ENCODE measurements at regions of chr9 and their contacts with region 1.

Region 1: DNA sequence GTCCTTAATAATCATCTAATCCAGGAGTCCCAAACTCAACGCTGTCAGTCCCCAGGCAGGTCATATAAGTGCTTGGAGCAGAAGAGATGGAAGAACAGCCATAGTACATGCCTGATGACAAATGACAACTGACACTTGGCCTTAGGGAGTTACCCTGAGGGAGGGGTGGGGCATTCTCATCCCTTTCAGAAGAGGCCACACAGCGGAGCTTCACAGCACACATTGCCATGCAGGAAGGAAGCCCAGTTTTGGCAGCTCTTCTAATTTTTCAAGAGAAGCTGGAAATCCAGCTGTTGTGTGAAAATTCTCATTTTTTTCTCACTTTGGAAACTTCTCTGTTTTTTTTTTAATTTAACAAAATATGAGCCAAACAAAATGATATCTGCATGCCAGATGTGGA is 89.0 kb downstream of the ASTN2 start:
- DNase-seq: no peak
- ATAC-seq: no peak
- H3K4me3 ChIP-seq: no peak overlapping the region
- H3K27ac ChIP-seq: no peak overlapping the region
- H3K4me1 ChIP-seq: no peaks in the 10 kb centered on the region
- H3K27me3 ChIP-seq: no peaks in the 10 kb centered on the region
- CTCF ChIP-seq: no peak

Region 2: GRCh38 chr9:117060963-117061362 is 264.9 kb before region 1 on chr9:
- intact Hi-C with region 1: no loop called
- DNase-seq: no peak
- ATAC-seq: no peak
- H3K4me3 ChIP-seq: no peak overlapping the region
- H3K27ac ChIP-seq: no peak overlapping the region
- H3K4me1 ChIP-seq: no peaks in the 10 kb centered on the region
- H3K27me3 ChIP-seq: no peaks in the 10 kb centered on the region
- CTCF ChIP-seq: no peak

Region 3: DNA sequence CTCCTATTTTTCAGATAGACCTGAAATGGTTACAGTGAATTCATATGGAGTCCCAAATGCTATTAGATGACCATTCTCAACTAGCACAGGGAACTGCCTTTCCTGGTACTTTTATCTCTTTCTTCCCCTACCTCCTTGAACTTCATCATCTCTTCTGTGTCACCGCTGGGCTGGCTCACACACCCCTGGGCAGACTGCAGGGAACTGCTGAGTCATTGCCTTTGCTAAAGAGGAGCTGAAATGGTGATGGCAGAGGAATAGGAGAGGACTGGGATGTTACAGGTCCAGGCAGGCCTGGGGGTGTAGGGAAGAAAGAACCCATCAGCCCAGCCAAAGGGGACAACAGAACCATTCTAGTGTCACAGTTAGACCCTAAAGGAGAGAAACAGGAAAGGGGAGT is 233.2 kb before region 1 on chr9:
- intact Hi-C with region 1: no loop called
- DNase-seq: no peak
- ATAC-seq: no peak
- H3K4me3 ChIP-seq: no peak overlapping the region
- H3K27ac ChIP-seq: no peak overlapping the region
- H3K4me1 ChIP-seq: no peaks in the 10 kb centered on the region
- H3K27me3 ChIP-seq: no peaks in the 10 kb centered on the region
- CTCF ChIP-seq: no peak

Region 4: DNA sequence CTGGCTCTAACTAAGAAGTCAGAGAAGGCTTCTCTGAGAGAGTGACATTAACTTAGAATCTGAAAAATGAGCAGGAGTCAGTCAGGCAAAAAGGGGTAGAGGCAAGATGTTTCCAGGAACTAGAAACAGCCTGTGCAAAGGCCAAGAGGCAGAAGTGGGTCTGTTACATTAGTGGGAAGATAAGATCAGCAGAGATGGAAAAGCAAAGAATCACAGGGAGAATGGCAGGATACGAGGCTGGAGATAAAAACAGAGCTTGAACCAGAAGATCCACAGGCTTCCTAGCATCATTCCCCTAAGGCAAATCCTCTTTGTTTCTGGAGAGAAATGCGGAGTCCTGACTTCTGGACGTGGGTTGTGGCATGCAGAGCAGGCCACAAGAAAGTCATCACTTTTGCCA is 61.6 kb after region 1 on chr9:
- intact Hi-C with region 1: loop called in 1 of 3 experiments (anchors 10 kb)
- DNase-seq: no peak
- ATAC-seq: no peak
- H3K4me3 ChIP-seq: no peak overlapping the region
- H3K27ac ChIP-seq: no peak overlapping the region
- H3K4me1 ChIP-seq: peaks cover 0 to 5% (median 0%) of the 10 kb centered on the region in 3 donors
- H3K27me3 ChIP-seq: no peaks in the 10 kb centered on the region
- CTCF ChIP-seq: no peak

Region 5: GRCh38 chr9:117718085-117718484 is 392.3 kb after region 1 on chr9:
- intact Hi-C with region 1: no loop called
- DNase-seq: no peak
- ATAC-seq: peak in 3 of 4 donors; percentile 55 to 80 (median 69)
- H3K4me3 ChIP-seq: no peak overlapping the region
- H3K27ac ChIP-seq: no peak overlapping the region
- H3K4me1 ChIP-seq: peaks cover 0 to 8% (median 0%) of the 10 kb centered on the region in 3 donors
- H3K27me3 ChIP-seq: no peaks in the 10 kb centered on the region
- CTCF ChIP-seq: no peak

Measured in pancreas (tissue), 10 donors.